PC-3 (cell line): ENCODE measurements at regions of chr2 and their contacts with region 1.

Region 1: DNA sequence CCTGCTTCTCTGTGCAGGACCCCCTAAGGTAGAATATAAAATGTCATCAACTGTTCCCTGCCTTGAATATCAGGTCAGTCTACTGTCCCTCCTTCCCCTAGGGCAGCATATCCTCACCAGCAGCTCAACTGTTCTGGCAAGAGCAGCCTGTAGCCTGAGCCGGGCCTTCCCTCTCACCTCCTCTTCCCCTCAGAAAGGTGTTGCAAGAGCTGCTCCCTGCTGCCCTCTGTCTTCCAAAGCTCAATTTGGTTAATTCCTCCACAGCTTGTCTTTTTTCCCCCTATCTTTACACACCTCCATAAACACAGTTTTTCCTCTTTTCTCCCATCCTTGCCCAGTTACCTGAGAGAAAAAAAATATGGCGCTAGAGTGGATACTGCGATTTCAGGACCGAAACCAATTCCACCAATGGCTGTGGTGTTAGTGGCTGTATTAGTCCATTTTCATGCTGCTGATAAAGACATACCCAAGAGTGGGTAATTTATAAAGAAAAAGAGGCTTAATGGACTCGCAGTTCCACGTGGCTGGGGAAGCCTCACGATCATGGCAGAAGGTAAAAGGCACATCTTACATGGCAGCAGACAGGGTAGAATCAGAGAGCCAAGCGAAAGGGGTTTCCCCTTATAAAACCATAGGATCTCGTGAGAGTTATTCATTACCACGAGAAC is 184.7 kb downstream of the MREG start:
- DNase-seq: peak; percentile 86
- ATAC-seq: peak; percentile 82
- H3K4me3 ChIP-seq: no peak overlapping the region
- H3K27ac ChIP-seq: no peak overlapping the region
- H3K4me1 ChIP-seq: peaks cover 30% of the 10 kb centered on the region
- H3K27me3 ChIP-seq: no peaks in the 10 kb centered on the region
- CTCF ChIP-seq: peak; percentile 85

Region 2: GRCh38 chr2:215435809-215436704 is 392.6 kb before region 1 on chr2 and contains the start of gene FN1:
- CTCF ChIA-PET with region 1: no interaction called
- POLR2A ChIA-PET with region 1: no interaction called
- intact Hi-C with region 1: loop called (anchors 5 kb)
- DNase-seq: peak; percentile 82
- ATAC-seq: peak; percentile 59
- H3K4me3 ChIP-seq: peak within 1 kb of the TSS; percentile 97
- H3K27ac ChIP-seq: peak within 1 kb of the TSS; percentile 82
- H3K4me1 ChIP-seq: peaks cover 38% of the 10 kb centered on the region
- H3K27me3 ChIP-seq: no peaks in the 10 kb centered on the region
- CTCF ChIP-seq: no peak
- total RNA-seq, gene FN1: 220 and 248 TPM in 2 replicates

Region 3: GRCh38 chr2:215441560-215442403 is 386.9 kb before region 1 on chr2:
- CTCF ChIA-PET with region 1: no interaction called
- POLR2A ChIA-PET with region 1: interaction called, 13 read pairs
- intact Hi-C with region 1: loop called (anchors 5 kb)
- DNase-seq: no peak
- ATAC-seq: no peak
- H3K4me3 ChIP-seq: no peak overlapping the region
- H3K27ac ChIP-seq: no peak overlapping the region
- H3K4me1 ChIP-seq: peaks cover 11% of the 10 kb centered on the region; the same call in 1 of the 2 replicates
- H3K27me3 ChIP-seq: no peaks in the 10 kb centered on the region
- CTCF ChIP-seq: no peak

Region 4: GRCh38 chr2:215454519-215455246 is 374.0 kb before region 1 on chr2:
- CTCF ChIA-PET with region 1: no interaction called
- POLR2A ChIA-PET with region 1: no interaction called
- intact Hi-C with region 1: loop called (anchors 2 kb)
- DNase-seq: peak; percentile 70
- ATAC-seq: peak; percentile 37
- H3K4me3 ChIP-seq: no peak overlapping the region
- H3K27ac ChIP-seq: no peak overlapping the region
- H3K4me1 ChIP-seq: 0 out of 2 replicates have a peak, but pooled peaks cover 7% of the 10 kb centered on the region
- H3K27me3 ChIP-seq: no peaks in the 10 kb centered on the region
- CTCF ChIP-seq: peak; percentile 88

Region 5: DNA sequence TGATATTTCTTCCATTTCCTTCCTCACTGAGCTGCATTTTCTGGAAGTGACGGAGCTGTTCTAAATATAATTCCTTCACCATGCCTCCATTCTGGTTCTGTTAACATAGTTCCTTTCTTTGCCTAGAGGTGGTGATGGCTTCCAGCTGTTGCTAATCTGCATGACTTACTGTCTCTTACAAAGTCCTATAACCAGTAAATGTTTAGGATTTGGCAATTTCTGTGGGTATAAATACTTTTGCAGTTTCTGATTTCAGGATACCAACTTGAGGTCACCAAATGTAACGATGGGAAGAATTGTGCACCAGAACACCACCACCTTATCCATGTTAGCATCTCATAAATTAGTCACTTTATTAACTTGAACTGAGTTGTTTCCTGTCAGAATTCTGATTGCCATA is 291.0 kb before region 1 on chr2:
- CTCF ChIA-PET with region 1: interaction called, 3 read pairs
- POLR2A ChIA-PET with region 1: no interaction called
- intact Hi-C with region 1: loop called (anchors 5 kb)
- DNase-seq: peak; percentile 74
- ATAC-seq: peak; percentile 47
- H3K4me3 ChIP-seq: no peak overlapping the region
- H3K27ac ChIP-seq: peak overlapping the region; percentile 84
- H3K4me1 ChIP-seq: peaks cover 41% of the 10 kb centered on the region
- H3K27me3 ChIP-seq: no peaks in the 10 kb centered on the region
- CTCF ChIP-seq: 0 out of 2 replicates have a peak, but pooled peaks have one; percentile 11

Region 6: DNA sequence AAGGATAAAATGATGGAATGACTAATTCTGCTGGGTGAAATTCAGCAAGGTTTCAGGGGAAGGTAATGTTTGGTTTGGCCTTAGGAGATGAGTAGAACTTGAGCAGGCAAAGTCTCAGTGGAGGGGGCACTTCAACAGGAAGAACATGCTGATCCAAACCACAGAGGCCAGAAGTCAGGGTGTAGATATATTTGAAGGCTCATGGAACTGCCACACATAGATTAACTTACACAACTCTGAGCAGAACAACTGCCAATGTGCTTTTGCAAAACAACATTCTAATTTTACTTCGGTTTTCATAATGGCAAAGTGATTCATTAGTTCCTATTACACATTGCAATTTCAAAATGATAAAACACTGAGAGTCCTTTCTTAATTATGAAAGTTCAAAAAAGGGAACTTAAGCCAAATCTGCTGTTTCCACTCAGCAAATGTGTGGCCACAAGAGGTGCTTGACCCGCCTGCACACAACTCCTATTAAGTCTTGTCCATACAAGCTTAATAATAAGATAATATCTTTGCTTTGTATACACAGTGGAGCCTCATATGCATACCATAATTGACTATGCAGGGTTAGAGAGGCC is 100.1 kb before region 1 on chr2:
- CTCF ChIA-PET with region 1: no interaction called
- POLR2A ChIA-PET with region 1: no interaction called
- intact Hi-C with region 1: loop called (anchors 5 kb)
- DNase-seq: peak; percentile 91
- ATAC-seq: peak; percentile 91
- H3K4me3 ChIP-seq: no peak overlapping the region
- H3K27ac ChIP-seq: peak overlapping the region; percentile 95
- H3K4me1 ChIP-seq: peaks cover 32% of the 10 kb centered on the region
- H3K27me3 ChIP-seq: no peaks in the 10 kb centered on the region
- CTCF ChIP-seq: no peak

Region 7: DNA sequence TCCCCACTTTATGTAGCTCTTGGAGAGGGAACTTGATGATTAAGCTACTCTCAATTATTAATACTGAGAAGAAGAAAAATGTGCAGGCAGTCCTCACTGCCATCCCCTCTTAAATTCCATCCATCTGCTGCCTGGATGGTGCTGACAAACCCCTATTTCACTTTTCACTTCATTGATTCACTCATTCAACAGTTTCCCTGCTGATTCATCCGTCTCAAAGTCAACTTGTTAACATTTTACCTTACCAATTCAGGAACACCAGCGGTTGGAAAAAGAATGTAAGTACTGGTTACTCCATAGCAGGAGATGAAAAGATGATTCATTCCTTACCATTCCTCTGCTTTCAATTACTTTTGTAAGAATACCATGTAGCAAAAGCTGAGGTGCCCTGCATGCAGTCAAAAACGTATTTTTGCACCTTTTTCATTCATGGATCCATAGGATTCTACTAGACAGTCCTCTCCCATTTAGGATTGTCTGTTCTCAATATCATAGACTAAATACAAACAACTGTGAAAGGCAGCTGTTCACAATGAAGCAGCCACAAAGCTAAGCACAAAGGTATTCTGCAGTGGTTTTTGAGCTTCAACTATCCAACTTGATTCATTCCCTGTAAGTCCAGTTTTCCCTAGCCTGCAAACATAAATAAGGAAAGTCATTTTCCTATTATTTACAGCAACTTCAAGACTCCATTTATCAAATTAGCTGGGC is 77.3 kb before region 1 on chr2:
- CTCF ChIA-PET with region 1: no interaction called
- POLR2A ChIA-PET with region 1: no interaction called
- intact Hi-C with region 1: loop called (anchors 5 kb)
- DNase-seq: peak; percentile 94
- ATAC-seq: peak; percentile 56
- H3K4me3 ChIP-seq: no peak overlapping the region
- H3K27ac ChIP-seq: peak overlapping the region; percentile 81
- H3K4me1 ChIP-seq: peaks cover 54% of the 10 kb centered on the region
- H3K27me3 ChIP-seq: no peaks in the 10 kb centered on the region
- CTCF ChIP-seq: no peak